ENCODE measurements at regions of chr12 and their contacts with region 1.

Region 1: DNA sequence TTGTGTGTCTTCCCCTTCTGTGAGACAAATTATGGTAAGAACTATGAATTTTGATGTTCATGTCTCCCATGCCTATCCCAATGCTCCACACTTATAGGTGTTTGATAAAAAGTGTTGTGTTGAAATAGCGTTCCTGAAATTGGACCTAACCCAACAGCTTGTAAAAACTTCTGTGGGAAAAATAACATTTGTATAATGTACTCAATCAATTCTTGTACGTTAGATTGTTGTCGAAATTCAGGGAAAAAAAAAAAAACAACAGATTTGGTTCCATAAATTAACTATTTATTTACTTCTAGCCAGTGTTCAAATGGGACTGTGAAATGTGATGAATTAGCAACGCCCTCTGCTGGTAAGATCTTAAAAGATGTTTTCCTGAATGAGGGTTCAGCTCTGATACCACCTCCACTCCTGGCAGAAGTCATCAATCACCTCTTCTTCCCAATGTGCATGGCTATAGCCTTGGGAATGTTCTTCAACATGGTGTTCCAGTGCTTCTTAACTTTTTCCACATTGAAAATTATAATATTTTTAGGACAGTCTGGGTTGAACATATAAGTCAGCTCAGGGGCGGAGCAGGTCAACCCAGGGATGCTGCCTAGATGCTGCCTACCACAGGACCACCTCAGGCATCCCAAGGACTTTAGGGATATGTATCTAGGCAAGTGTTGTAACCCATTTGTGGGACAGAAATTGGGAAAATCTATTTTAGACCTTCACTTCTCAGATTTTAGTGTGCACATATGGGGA is 170.6 kb downstream of the OTOGL start:
- DNase-seq: peak; percentile 35
- ATAC-seq: no peak
- H3K4me3 ChIP-seq: no peak overlapping the region
- H3K4me3 Mint-ChIP-seq: no peak overlapping the region
- H3K27ac ChIP-seq: no peak overlapping the region
- H3K27ac Mint-ChIP-seq: no peak overlapping the region
- H3K4me1 ChIP-seq: no peaks in the 10 kb centered on the region
- H3K4me1 Mint-ChIP-seq: no peaks in the 10 kb centered on the region
- H3K27me3 ChIP-seq: no peaks in the 10 kb centered on the region
- H3K27me3 Mint-ChIP-seq: peaks cover 3% of the 10 kb centered on the region
- CTCF ChIP-seq: peak; percentile 79

Region 2: GRCh38 chr12:79407671-79408622 is 862.0 kb before region 1 on chr12:
- CTCF ChIA-PET with region 1: interaction called, 13 read pairs
- POLR2A ChIA-PET with region 1: no interaction called
- intact Hi-C with region 1: no loop called
- DNase-seq: peak; percentile 46
- ATAC-seq: peak; percentile 33
- H3K4me3 ChIP-seq: no peak overlapping the region
- H3K4me3 Mint-ChIP-seq: no peak overlapping the region
- H3K27ac ChIP-seq: no peak overlapping the region
- H3K27ac Mint-ChIP-seq: no peak overlapping the region
- H3K4me1 ChIP-seq: no peaks in the 10 kb centered on the region
- H3K4me1 Mint-ChIP-seq: no peaks in the 10 kb centered on the region
- H3K27me3 ChIP-seq: no peaks in the 10 kb centered on the region
- H3K27me3 Mint-ChIP-seq: no peaks in the 10 kb centered on the region
- CTCF ChIP-seq: peak; percentile 52

Region 3: GRCh38 chr12:79555028-79555930 is 714.7 kb before region 1 on chr12:
- CTCF ChIA-PET with region 1: no interaction called
- POLR2A ChIA-PET with region 1: no interaction called
- intact Hi-C with region 1: loop called (anchors 5 kb)
- DNase-seq: peak; percentile 22
- ATAC-seq: no peak
- H3K4me3 ChIP-seq: no peak overlapping the region
- H3K4me3 Mint-ChIP-seq: no peak overlapping the region
- H3K27ac ChIP-seq: no peak overlapping the region
- H3K27ac Mint-ChIP-seq: no peak overlapping the region
- H3K4me1 ChIP-seq: peaks cover 3 to 5% of the 10 kb centered on the region in 2 donors
- H3K4me1 Mint-ChIP-seq: peaks cover 5% of the 10 kb centered on the region
- H3K27me3 ChIP-seq: no peaks in the 10 kb centered on the region
- H3K27me3 Mint-ChIP-seq: no peaks in the 10 kb centered on the region
- CTCF ChIP-seq: peak; percentile 53

Region 4: DNA sequence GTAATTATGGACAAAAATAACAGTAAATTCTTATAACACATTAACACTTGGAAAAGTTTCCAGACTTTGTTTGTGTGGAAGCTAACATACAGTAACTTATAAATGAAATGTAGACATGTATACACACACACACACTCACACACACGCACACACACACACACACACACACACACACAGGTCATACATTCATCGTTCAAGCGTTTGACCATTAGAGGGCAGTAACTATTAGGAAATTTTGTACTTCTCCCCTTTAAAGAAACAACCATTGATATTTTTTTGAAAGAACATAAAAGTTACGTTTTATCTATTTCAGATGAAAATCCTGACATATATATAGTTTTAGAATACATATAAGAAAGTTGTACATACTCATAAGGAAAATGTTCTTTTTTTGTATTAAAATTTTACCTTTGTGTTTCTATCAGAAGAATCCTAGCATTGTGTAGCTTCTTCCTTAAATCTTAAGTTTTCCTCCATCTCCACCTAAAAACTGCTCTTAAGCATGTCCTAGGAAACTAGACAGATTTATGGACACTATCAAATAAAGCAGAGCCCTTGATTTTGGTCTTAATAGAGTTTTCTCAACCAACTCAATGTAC is 203.0 kb after region 1 on chr12:
- CTCF ChIA-PET with region 1: no interaction called
- POLR2A ChIA-PET with region 1: no interaction called
- intact Hi-C with region 1: no loop called
- DNase-seq: peak; percentile 16
- ATAC-seq: no peak
- H3K4me3 ChIP-seq: no peak overlapping the region
- H3K4me3 Mint-ChIP-seq: no peak overlapping the region
- H3K27ac ChIP-seq: no peak overlapping the region
- H3K27ac Mint-ChIP-seq: no peak overlapping the region
- H3K4me1 ChIP-seq: no peaks in the 10 kb centered on the region
- H3K4me1 Mint-ChIP-seq: no peaks in the 10 kb centered on the region
- H3K27me3 ChIP-seq: no peaks in the 10 kb centered on the region
- H3K27me3 Mint-ChIP-seq: no peaks in the 10 kb centered on the region
- CTCF ChIP-seq: no peak

Measured in B cell (primary cell).